ENCODE measurements at regions of chr7 and their contacts with region 1.

Region 1: GRCh38 chr7:70953331-70953741 is 178.6 kb upstream of the GALNT17 start:
- DNase-seq: no peak
- H3K4me3 ChIP-seq: no peak overlapping the region
- H3K27ac ChIP-seq: no peak overlapping the region
- H3K4me1 ChIP-seq: no peaks in the 10 kb centered on the region
- H3K27me3 ChIP-seq: no peaks in the 10 kb centered on the region
- CTCF ChIP-seq: no peak

Region 2: GRCh38 chr7:70972693-70973092 is 19.4 kb after region 1 on chr7:
- CTCF ChIA-PET with region 1: no interaction called
- POLR2A ChIA-PET with region 1: no interaction called
- intact Hi-C with region 1: loop called (anchors 1 kb)
- DNase-seq: no peak
- H3K4me3 ChIP-seq: no peak overlapping the region
- H3K27ac ChIP-seq: no peak overlapping the region
- H3K4me1 ChIP-seq: no peaks in the 10 kb centered on the region
- H3K27me3 ChIP-seq: no peaks in the 10 kb centered on the region
- CTCF ChIP-seq: no peak

Region 3: DNA sequence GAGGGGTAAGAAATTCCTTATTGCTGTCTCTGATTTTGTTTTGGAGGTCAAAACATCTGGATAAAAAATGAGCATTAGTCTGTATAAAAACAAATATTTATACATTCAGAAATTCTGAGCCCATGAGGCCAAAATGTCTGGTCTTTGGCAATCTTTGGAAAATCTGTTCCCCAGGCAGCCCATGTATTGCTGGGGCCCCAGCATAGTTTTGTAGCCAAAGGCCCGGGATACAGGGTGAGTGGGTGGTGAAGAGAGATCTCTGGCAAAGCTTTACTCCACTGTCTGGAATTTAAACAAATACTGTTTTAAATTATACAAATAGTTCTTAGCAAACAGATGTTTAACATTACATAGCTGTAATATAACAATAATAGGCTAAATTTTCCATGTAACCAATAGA is 43.9 kb after region 1 on chr7:
- CTCF ChIA-PET with region 1: no interaction called
- POLR2A ChIA-PET with region 1: no interaction called
- intact Hi-C with region 1: no loop called
- DNase-seq: no peak
- H3K4me3 ChIP-seq: no peak overlapping the region
- H3K27ac ChIP-seq: no peak overlapping the region
- H3K4me1 ChIP-seq: no peaks in the 10 kb centered on the region
- H3K27me3 ChIP-seq: no peaks in the 10 kb centered on the region
- CTCF ChIP-seq: no peak

Region 4: DNA sequence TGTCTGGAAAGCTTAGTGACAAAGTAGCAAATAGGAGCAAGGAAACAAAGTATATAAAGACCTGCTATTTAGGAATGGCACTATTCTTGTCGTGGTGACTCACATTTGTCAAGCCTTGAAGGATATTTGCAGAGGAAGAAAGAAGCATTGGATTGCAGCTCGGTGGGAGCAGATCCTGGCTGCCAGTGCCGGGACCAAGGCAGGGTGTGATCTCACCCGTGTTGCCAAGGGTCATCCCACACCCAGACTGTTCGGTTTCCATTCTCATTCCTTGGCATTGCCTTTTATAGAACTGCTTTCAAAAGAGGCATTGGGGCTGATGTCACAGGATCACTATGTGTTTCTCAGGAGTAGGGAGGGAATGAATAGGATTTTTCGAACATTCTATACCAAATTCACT is 354.8 kb after region 1 on chr7:
- CTCF ChIA-PET with region 1: no interaction called
- POLR2A ChIA-PET with region 1: no interaction called
- intact Hi-C with region 1: no loop called
- DNase-seq: no peak
- H3K4me3 ChIP-seq: no peak overlapping the region
- H3K27ac ChIP-seq: no peak overlapping the region
- H3K4me1 ChIP-seq: no peaks in the 10 kb centered on the region
- H3K27me3 ChIP-seq: no peaks in the 10 kb centered on the region
- CTCF ChIP-seq: no peak

Measured in A673 (cell line).